SK-N-SH (cell line): ENCODE measurements at regions of chr6 and their contacts with region 1.

Region 1: GRCh38 chr6:30742316-30743098 is at the start of gene FLOT1:
- DNase-seq: peak; percentile 97
- H3K4me3 ChIP-seq: peak within 1 kb of the TSS; percentile 75 to 76
- H3K27ac ChIP-seq: peak within 1 kb of the TSS; percentile 84 to 95
- H3K4me1 ChIP-seq: peaks cover 21 to 30% of the 10 kb centered on the region in 2 experiments
- H3K27me3 ChIP-seq: no peaks in the 10 kb centered on the region
- CTCF ChIP-seq: no peak
- EP300 ChIP-seq: no peak; a peak in 1 of 4 replicates
- RAD21 ChIP-seq: no peak
- polyA plus RNA-seq, gene FLOT1: 457 and 462 TPM in 2 replicates

Region 2: DNA sequence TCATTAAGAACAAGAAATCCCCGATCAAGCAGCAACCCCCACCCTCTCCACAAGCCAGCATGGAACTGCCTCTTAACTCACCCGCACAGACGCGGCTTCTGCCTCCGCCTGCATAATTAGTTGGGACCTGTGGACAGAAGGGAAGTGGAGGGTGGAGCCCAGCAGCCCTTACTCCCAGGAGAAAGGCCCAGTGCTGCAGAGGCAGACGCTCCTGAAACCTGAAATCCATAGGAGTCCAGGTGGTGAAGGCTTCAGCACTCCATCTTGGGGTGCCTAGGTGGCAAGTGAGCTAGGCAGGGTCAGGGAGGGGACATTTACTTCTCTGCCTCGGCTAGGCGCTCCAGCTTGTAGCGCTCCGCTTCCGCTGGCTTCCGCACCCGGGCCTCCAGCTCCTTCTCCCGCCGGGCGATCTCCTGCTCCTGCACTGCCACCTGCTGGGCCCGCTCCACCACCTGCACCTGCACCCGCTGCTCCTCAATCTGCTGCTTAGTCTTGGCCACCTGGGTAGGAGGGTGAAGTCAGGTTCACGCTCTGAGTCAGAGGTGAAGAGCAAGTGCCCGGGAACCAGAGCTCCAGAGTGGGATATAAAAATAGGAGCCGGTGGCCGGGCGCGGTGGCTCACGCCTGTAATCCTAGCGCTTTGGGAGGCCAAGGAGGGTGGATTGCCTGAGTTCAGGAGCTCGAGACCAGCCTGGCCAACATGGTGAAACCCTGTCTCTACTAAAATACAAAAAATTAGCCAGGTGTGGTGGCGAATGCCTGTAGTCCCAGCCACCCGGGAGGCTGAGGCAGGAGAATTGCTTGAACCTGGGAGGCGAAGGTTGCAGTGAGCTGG is 11.7 kb before region 1 on chr6:
- CTCF ChIA-PET with region 1: interaction called, 26 read pairs
- POLR2A ChIA-PET with region 1: interaction called, 6 read pairs
- DNase-seq: peak; percentile 77
- H3K4me3 ChIP-seq: no peak overlapping the region
- H3K27ac ChIP-seq: peak overlapping the region in 1 of 2 experiments; percentile 62; a peak in 2 of 4 replicates
- H3K4me1 ChIP-seq: peaks cover 0 to 3% of the 10 kb centered on the region in 2 experiments; a peak in 1 of 4 replicates
- H3K27me3 ChIP-seq: no peaks in the 10 kb centered on the region
- CTCF ChIP-seq: peak; percentile 51
- EP300 ChIP-seq: no peak
- RAD21 ChIP-seq: peak; percentile 67